ENCODE measurements at regions of chr11 and their contacts with region 1.

Region 1: DNA sequence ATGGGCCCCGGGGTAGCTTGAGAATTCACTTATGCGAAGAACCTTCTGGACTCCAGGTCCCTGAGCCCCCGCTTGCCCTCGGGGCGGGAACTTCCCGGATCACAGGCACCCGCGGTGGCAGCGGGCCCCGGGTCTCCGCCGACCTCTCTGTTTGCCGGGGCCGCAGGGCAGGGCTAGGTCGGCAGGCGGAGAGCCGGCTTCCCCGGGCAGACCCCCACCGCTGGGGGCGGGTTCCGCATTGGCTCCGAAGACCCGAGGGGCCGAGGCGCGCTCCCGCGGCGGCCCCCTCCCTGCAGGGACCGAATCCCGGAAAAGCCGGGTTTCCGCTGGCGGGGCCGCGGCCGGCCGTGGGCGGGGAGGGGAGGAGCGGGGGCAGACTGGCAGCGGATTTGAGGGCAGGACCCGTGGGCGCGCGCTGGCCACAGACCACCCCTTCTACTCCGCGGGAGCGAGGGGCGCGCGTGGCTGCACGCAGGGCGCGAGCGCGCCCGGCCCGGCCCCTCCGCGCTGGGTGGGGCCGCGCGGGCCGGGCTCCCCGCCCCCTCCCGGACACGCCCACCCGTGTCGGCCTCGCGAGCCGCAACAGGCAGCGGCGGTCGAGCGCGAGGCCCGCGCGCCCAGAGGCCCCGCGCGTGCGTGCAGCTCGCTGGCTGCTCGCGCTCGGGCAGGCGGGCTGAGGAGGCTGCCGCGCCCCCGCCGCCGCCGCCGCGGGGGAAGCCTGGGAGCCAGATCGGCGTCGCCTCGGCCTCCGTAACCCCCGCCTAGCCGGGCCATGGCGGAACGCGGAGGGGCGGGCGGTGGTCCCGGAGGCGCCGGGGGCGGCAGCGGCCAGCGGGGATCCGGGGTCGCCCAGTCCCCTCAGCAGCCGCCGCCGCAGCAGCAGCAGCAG is at the start of gene PACS1:
- DNase-seq: peak; percentile 76
- H3K4me3 ChIP-seq: peak within 1 kb of the TSS; percentile 60 to 94 (median 82)
- H3K27ac ChIP-seq: peak within 1 kb of the TSS; percentile 93 to 95 (median 94)
- H3K4me1 ChIP-seq: peaks cover 10 to 34% (median 24%) of the 10 kb centered on the region in 4 donors
- H3K27me3 ChIP-seq: no peaks in the 10 kb centered on the region
- CTCF ChIP-seq: no peak
- EP300 ChIP-seq: no peak
- POLR2A ChIP-seq: peak; percentile 45
- total RNA-seq, gene PACS1: 9.8 to 52.0 (median 27.2) TPM

Region 2: GRCh38 chr11:65859200-65859811 is 210.7 kb before region 1 on chr11:
- in situ Hi-C with region 1: no loop called
- intact Hi-C with region 1: no loop called
- DNase-seq: peak; percentile 99
- H3K4me3 ChIP-seq: peak overlapping the region; percentile 65 to 97 (median 88)
- H3K27ac ChIP-seq: peak overlapping the region; percentile 97 to 100 (median 100)
- H3K4me1 ChIP-seq: peaks cover 32 to 57% (median 48%) of the 10 kb centered on the region in 4 donors
- H3K27me3 ChIP-seq: no peaks in the 10 kb centered on the region
- CTCF ChIP-seq: peak in 3 of 5 experiments; percentile 9 to 35 (median 25)
- EP300 ChIP-seq: no peak
- POLR2A ChIP-seq: peak; percentile 90

Region 3: GRCh38 chr11:66133216-66133775 is 63.3 kb after region 1 on chr11:
- in situ Hi-C with region 1: loop called in 1 of 4 experiments (anchors 5 kb)
- intact Hi-C with region 1: no loop called
- DNase-seq: no peak
- H3K4me3 ChIP-seq: no peak overlapping the region
- H3K27ac ChIP-seq: no peak overlapping the region
- H3K4me1 ChIP-seq: peaks cover 0 to 19% (median 7%) of the 10 kb centered on the region in 4 donors
- H3K27me3 ChIP-seq: no peaks in the 10 kb centered on the region
- CTCF ChIP-seq: no peak
- EP300 ChIP-seq: no peak
- POLR2A ChIP-seq: no peak

Region 4: GRCh38 chr11:66207876-66208275 is 137.9 kb after region 1 on chr11:
- in situ Hi-C with region 1: no loop called
- intact Hi-C with region 1: no loop called
- DNase-seq: no peak
- H3K4me3 ChIP-seq: no peak overlapping the region
- H3K27ac ChIP-seq: no peak overlapping the region
- H3K4me1 ChIP-seq: no peaks in the 10 kb centered on the region
- H3K27me3 ChIP-seq: no peaks in the 10 kb centered on the region
- CTCF ChIP-seq: no peak
- EP300 ChIP-seq: no peak
- POLR2A ChIP-seq: no peak

Region 5: GRCh38 chr11:67119585-67120391 is 1049.8 kb after region 1 on chr11:
- in situ Hi-C with region 1: no loop called
- intact Hi-C with region 1: loop called (anchors 5 kb)
- DNase-seq: peak; percentile 32
- H3K4me3 ChIP-seq: peak overlapping the region; percentile 98 to 100 (median 98)
- H3K27ac ChIP-seq: peak overlapping the region; percentile 98 to 100 (median 100)
- H3K4me1 ChIP-seq: peaks cover 17 to 59% (median 22%) of the 10 kb centered on the region in 4 donors
- H3K27me3 ChIP-seq: no peaks in the 10 kb centered on the region
- CTCF ChIP-seq: no peak
- EP300 ChIP-seq: no peak
- POLR2A ChIP-seq: no peak

Measured in transverse colon (tissue), 4 donors.